Activated naive CD8-positive, alpha-beta T cell treated with anti-CD3 and anti-CD28 coated beads, Interleukin-2, amount 10 ng/mL, durations not matched to agents 7 days and 5 days (primary cell): ENCODE measurements at regions of chr5 and their contacts with region 1.

Region 1: DNA sequence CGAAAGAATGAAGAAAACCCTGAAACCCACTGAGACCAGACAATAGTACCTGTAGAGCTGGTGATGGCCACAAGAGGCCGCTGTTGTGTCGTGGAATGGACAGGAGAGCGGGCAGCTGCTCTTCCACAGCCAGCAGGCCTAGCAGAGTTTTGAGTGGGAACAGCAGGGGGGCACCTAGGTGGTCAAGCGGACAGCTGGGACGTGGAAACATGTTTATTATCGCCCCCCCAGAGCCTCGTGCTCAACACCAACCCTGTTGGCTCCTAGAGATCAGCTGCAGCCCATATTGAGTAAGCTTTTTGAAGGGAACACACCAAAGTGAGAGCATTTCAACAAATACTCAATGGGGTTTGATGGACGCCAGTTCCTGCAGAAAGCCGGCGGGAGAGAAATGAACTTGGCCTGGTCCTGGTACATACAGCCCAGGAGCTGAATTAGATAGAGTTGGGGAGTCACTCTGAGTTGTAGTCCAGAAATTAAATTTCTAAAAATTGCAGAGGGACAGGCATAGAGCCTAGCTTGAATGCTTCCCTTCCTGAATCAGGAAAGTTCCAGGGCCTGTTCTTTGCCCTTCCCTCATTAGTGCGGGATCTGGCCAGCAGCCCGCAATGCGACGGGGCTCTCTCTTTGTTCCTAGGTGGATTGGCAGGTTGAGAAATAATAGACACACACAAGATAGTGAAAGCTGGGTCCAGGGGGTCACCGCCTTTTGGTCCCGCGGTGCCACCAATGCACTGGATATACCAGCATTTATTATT is 33.8 kb downstream of the MFAP3 start:
- DNase-seq: peak; percentile 89
- ATAC-seq: peak; percentile 78
- H3K4me3 Mint-ChIP-seq: peak overlapping the region; percentile 64
- H3K27ac Mint-ChIP-seq: peak overlapping the region; percentile 78
- H3K4me1 Mint-ChIP-seq: peaks cover 40% of the 10 kb centered on the region
- H3K27me3 Mint-ChIP-seq: peaks cover 3% of the 10 kb centered on the region

Region 2: DNA sequence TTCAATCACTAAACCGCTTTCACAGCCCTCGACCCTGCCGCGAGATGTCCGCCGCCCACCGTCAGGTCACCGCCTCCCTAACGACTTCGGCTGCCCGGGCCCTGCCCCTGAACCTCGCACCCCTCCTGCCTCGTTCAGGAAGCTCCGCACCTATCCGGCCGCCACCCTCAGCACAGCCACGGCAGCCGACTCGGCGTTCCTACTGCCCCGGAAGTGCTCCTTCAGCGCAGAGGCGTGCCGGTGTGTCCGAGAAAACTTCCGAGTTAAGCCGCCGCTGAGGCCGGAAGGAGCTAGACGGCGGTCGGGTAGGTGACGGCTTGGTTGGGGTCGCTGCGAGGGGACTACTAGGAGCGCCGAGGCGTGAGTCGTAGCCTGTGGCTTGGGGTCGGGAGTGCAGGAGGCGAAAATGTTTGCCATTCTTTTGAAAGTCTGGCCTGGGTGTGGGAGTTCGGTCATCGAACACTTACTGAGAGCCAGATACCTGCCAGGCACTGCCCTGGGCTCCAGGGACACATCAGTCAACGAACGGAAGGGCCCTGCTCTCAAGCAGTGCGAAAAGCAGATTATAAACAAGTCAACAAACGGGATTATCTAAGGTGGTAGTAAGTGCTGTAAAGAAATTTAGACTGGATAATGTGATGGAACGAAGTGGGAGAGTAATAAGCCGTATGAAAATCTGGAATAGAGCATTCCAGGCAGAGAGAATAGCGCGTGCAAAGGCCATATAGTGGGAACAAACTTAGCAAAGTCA is 33.7 kb before region 1 on chr5 and contains the starts of genes FAM114A2 and MFAP3:
- POLR2A ChIA-PET with region 1: interaction called, 24 read pairs
- DNase-seq: peak; percentile 87
- ATAC-seq: peak; percentile 99
- H3K4me3 Mint-ChIP-seq: peak within 1 kb of the TSS; percentile 92
- H3K27ac Mint-ChIP-seq: peak within 1 kb of the TSS; percentile 96
- H3K4me1 Mint-ChIP-seq: peaks cover 36% of the 10 kb centered on the region
- H3K27me3 Mint-ChIP-seq: no peaks in the 10 kb centered on the region
- total RNA-seq, gene FAM114A2: 25.8 to 28.6 TPM
- total RNA-seq, gene MFAP3: 26.0 to 26.1 TPM

Region 3: GRCh38 chr5:154179846-154180710 is 107.5 kb after region 1 on chr5:
- POLR2A ChIA-PET with region 1: interaction called, 20 read pairs
- DNase-seq: peak; percentile 40
- ATAC-seq: peak; percentile 81
- H3K4me3 Mint-ChIP-seq: no peak overlapping the region
- H3K27ac Mint-ChIP-seq: no peak overlapping the region
- H3K4me1 Mint-ChIP-seq: peaks cover 23% of the 10 kb centered on the region
- H3K27me3 Mint-ChIP-seq: peaks cover 21% of the 10 kb centered on the region

Region 4: DNA sequence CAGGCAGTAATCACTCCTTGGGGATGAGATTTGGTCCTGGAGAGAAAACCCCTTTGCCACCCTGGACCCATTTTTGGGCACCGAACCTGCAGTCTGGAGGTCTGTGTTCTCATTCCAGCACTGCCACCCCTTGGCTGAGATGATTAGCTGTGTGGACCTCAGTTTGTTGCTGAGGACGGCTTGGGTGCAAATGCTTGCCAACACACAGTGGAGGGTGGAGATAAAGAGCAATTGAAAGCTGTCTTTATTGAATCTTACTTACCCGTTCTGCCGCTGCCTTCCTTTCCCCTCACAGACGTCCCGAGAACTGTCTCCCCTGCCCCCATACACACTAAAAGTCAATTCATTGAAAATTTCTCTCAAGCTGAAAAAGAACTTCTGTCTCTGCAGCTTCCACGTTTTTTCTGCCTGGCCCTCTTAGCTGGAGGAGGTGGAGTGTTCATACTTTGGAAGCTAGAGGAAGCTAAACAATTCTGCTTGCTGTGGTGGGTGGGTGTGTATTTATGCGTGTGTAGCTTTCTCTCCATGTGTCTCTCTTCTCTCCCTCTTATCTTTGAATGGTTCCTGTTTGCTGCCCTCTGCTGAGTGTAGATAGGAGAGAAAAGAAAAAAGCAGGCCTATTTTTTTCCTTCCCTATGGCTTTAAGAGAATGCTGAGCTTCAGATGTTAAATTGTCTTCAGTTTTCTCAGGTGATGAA is 124.5 kb after region 1 on chr5:
- POLR2A ChIA-PET with region 1: interaction called, 15 read pairs
- DNase-seq: no peak
- ATAC-seq: no peak
- H3K4me3 Mint-ChIP-seq: peak overlapping the region; percentile 67
- H3K27ac Mint-ChIP-seq: peak overlapping the region; percentile 93
- H3K4me1 Mint-ChIP-seq: peaks cover 46% of the 10 kb centered on the region
- H3K27me3 Mint-ChIP-seq: no peaks in the 10 kb centered on the region